ENCODE measurements at regions of chr10 and their contacts with region 1.

Region 1: DNA sequence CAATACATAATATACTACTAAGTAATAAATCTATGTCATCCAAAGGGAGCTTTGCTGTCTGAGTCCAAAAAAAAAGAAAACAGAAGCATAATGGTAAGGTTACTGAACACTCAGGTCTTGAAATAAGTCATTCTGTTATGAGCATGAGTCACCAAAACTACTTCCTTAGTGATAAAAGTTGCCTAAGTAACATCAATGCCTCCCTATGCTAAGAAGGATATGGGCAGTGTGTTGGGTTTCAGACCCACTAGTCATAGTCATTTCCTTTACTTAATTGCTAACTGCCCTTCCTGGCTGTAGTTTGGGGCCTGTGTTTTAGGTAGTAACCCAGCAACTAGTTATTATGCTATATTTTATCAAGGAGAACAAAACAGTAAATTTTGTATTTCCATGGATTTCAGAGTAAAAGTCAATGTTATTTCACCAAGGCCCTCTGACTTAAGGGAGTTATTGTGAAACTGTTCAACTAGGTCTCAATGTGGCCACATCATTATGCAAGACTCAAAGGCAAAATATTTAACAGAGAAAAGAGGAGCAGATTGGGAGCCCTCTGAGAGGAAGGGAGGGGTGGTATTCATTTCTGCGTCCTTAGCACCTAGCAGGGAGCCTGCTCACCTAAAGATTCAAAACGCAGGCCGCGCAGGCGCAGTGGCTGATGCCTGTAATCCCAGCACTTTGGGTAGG is 11.7 kb upstream of the VIM start:
- H3K4me3 Mint-ChIP-seq: no peak overlapping the region
- H3K27ac Mint-ChIP-seq: peak overlapping the region; percentile 96
- H3K4me1 Mint-ChIP-seq: peaks cover 59% of the 10 kb centered on the region
- H3K27me3 Mint-ChIP-seq: no peaks in the 10 kb centered on the region

Region 2: DNA sequence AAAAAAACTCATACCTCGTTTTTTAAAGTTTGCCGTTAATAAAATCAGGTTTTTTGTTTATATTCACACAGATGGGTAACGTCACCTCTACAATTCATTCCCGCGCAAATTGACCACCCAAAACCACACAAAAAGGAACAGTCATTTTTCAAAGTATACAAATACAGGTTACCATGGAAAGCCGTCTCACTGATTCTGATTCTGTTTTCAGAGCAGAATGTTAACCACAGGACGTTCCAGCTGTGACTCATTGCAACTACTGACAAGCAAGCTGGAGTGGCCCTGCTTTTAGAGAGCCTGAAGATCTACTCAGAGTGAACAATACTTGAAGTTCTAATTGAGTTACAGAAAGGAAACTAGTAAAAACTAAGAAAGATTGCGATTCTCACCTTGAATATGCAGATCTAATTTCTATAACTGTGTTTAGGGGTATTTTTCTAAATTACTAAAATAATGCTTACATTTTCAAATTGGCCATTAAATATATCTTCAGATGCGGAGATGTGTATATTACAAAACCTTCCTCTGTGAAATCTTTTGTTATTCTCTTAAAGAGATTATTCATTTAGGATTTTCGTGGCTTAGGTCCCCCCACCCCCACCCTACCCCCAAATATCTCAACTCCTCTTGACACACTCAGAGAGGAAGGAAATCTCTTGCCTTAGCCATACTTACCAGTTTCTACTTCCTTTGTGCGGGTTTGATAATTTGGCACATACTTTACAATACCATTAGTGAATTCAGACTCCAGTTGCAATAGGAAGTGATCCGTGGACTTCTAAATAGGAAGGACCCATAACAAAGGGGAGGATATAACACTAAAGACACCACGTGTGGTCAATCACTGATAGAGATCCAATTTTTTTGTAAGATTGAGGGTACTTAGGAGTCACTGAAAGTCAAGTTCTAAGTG is 192.7 kb before region 1 on chr10:
- intact Hi-C with region 1: loop called (anchors 1 kb)
- H3K4me3 Mint-ChIP-seq: peak overlapping the region; percentile 11
- H3K27ac Mint-ChIP-seq: peak overlapping the region; percentile 83
- H3K4me1 Mint-ChIP-seq: peaks cover 26% of the 10 kb centered on the region
- H3K27me3 Mint-ChIP-seq: no peaks in the 10 kb centered on the region

Region 3: GRCh38 chr10:17200912-17201793 is 15.2 kb before region 1 on chr10 and contains the start of gene TRDMT1:
- intact Hi-C with region 1: loop called (anchors 1 kb)
- H3K4me3 Mint-ChIP-seq: peak within 1 kb of the TSS; percentile 96
- H3K27ac Mint-ChIP-seq: peak within 1 kb of the TSS; percentile 99
- H3K4me1 Mint-ChIP-seq: peaks cover 57% of the 10 kb centered on the region
- H3K27me3 Mint-ChIP-seq: no peaks in the 10 kb centered on the region